GM12878 (cell line): ENCODE measurements at regions of chr1 and their contacts with region 1.

Region 1: DNA sequence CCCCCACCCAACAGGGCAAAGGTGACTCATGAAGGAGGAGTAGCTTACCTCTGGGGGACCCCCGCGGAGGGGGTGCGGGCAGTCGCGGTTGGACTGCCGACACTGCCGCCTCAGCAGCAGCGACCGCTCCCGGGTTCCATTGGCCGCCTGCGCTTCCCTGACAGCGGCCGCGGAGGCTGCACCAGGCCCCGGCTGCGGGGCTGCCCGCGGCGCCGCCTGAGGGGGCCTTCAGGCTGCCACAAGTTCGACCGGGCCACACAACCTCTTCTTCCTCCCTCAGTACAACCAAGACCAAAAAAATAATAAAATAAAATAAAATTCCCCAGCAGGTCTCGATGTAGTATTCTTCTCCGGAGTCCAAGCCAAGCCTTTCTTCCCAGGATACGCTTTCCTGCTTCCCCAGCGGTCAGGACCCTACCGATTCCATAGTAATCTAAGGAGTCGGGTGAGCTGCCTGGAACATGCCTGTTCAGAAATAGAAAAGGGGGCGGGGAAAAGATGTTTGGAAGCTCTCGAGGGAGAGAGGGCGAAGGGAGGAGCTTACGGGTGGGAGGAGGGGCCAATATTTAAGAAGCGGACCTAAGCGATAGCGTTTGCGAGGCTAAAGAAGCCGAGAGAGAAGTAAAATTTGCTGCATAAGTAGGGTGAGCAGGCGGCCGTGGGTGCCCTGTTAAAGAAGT is at the start of gene PI4KB:
- DNase-seq: peak; percentile 83
- ATAC-seq: peak; percentile 93
- H3K4me3 ChIP-seq: peak within 1 kb of the TSS; percentile 74
- H3K27ac ChIP-seq: peak within 1 kb of the TSS; percentile 95
- H3K4me1 ChIP-seq: peaks cover 9% of the 10 kb centered on the region; the same call in 1 of the 2 replicates
- H3K27me3 ChIP-seq: no peaks in the 10 kb centered on the region
- CTCF ChIP-seq: no peak
- EP300 ChIP-seq: no peak
- POLR2A ChIP-seq: peak; percentile 83
- RAD21 ChIP-seq: no peak
- polyA plus RNA-seq, gene PI4KB: 3.3 to 7.2 TPM

Region 2: GRCh38 chr1:151198255-151199127 is 128.9 kb before region 1 on chr1 and contains the start of gene PIP5K1A:
- CTCF ChIA-PET with region 1: interaction called, 3 read pairs
- POLR2A ChIA-PET with region 1: no interaction called
- RAD21 ChIA-PET with region 1: no interaction called
- SMC1A ChIA-PET with region 1: no interaction called
- in situ Hi-C with region 1: no loop called
- intact Hi-C with region 1: loop called (anchors 5 kb)
- DNase-seq: peak; percentile 93
- ATAC-seq: peak; percentile 92
- H3K4me3 ChIP-seq: peak within 1 kb of the TSS; percentile 98
- H3K27ac ChIP-seq: peak within 1 kb of the TSS; percentile 82
- H3K4me1 ChIP-seq: peaks cover 4% of the 10 kb centered on the region; the same call in 1 of the 2 replicates
- H3K27me3 ChIP-seq: no peaks in the 10 kb centered on the region
- CTCF ChIP-seq: no peak
- EP300 ChIP-seq: peak in 1 of 2 experiments; percentile 36; a peak in 1 of 4 replicates
- POLR2A ChIP-seq: peak; percentile 86
- RAD21 ChIP-seq: no peak
- polyA plus RNA-seq, gene PIP5K1A: 4.5 to 5.8 TPM

Region 3: DNA sequence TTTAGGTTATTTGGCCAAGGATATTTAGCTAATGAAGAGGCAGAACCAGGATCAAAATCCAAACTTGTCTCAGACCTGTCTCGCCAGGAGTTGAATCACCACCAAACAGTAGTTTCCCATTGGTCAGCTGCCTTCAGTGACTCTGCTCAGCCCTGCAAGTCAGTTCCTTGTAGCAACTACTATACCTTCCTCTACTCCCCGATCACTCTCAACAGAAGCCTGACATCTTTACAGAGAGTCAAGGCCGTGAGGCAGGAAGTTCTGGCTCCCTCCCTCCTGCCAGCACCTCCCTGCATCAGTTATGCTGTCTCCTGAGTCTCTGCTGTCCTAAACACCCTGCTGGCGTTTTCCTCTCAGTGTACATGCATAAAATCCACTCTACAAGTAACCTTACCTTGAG is 59.6 kb before region 1 on chr1:
- CTCF ChIA-PET with region 1: no interaction called
- POLR2A ChIA-PET with region 1: no interaction called
- RAD21 ChIA-PET with region 1: no interaction called
- SMC1A ChIA-PET with region 1: no interaction called
- in situ Hi-C with region 1: no loop called
- intact Hi-C with region 1: no loop called
- DNase-seq: no peak
- ATAC-seq: no peak
- H3K4me3 ChIP-seq: no peak overlapping the region
- H3K27ac ChIP-seq: no peak overlapping the region
- H3K4me1 ChIP-seq: no peaks in the 10 kb centered on the region
- H3K27me3 ChIP-seq: no peaks in the 10 kb centered on the region
- CTCF ChIP-seq: no peak
- EP300 ChIP-seq: no peak
- POLR2A ChIP-seq: no peak
- RAD21 ChIP-seq: no peak

Region 4: DNA sequence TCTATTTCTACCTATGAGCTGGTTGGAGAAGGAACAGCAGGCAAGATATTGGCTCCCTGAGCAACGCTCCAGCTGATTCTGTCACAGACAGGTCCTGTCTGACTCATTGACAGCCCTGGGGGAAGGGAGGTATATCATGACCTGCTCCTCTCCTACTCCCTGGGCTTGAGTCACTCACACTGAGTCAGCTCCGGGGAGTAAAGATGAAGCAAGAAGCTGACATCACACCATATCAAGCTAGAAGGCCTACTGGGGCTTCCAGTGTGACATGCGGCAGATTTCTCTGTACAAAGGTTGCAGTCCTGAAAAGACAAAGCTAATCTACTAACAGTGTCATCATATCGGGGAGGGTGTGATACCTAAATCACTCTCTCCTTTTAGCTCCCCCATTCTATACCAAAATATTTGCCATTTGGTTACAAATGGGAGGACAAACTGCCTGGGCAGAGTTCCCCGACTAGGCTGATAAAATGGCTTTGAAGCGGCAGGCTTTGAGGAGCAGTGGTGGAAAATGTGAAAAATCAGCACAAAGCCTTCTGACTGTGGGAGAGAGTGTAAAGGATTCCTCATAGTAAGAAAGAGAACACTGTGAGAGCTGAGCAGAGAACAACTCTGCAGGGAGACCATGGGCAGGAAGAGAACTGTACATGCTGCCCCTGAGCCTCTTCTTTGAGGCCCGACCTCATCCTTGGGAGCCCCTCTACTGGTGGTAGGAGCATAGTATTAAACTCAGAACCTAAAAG is 15.6 kb before region 1 on chr1:
- CTCF ChIA-PET with region 1: interaction called, 5 read pairs
- POLR2A ChIA-PET with region 1: interaction called, 19 read pairs
- RAD21 ChIA-PET with region 1: interaction called, 3 read pairs
- SMC1A ChIA-PET with region 1: interaction called, 12 read pairs
- in situ Hi-C with region 1: no loop called
- intact Hi-C with region 1: no loop called
- DNase-seq: no peak
- ATAC-seq: 0 out of 3 replicates have a peak, but pooled peaks have one; percentile 21
- H3K4me3 ChIP-seq: no peak overlapping the region
- H3K27ac ChIP-seq: no peak overlapping the region
- H3K4me1 ChIP-seq: no peaks in the 10 kb centered on the region
- H3K27me3 ChIP-seq: no peaks in the 10 kb centered on the region
- CTCF ChIP-seq: no peak
- EP300 ChIP-seq: no peak
- POLR2A ChIP-seq: no peak; the same call in 1 of the 2 replicates
- RAD21 ChIP-seq: no peak

Region 5: DNA sequence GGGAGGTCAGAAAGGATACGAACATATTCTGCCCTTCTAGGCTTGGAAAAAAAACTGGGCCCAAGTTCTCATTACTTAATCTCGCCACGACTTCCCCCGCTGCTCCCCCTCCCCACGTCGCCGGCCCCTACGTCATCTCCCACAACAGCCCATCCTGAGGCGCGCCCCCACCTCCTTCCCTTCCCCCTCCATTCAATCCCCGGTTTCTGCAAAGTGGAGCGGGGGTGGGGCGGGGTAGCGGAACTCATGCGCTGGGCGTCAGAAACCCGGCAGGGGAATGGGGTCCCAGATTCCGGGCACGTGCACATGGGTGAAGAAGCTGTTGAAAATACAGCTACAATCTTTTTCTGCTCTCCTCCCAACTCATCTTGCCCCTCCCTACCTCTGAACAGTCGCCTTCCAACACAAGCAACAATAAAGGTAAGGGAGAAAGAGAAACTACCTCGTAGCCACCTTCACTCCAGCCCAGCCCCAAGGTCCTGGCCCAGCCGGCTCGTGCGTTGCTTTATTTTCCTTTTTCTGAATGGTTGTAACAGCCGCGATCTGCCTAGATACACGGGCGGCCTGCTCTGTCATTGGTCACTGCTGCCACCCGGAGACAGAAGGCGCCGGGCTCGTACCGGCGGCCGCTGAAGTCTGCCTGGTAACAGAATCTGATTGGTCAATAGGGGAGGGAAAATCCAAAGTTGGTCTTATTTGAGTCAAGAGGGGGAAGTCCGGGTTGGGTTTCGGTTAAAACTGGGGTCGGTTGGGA is 19.6 kb after region 1 on chr1 and contains the start of gene RFX5:
- CTCF ChIA-PET with region 1: interaction called, 7 read pairs
- POLR2A ChIA-PET with region 1: interaction called, 110 read pairs
- RAD21 ChIA-PET with region 1: interaction called, 5 read pairs
- SMC1A ChIA-PET with region 1: interaction called, 75 read pairs
- in situ Hi-C with region 1: no loop called
- intact Hi-C with region 1: no loop called
- DNase-seq: peak; percentile 98
- ATAC-seq: peak; percentile 97
- H3K4me3 ChIP-seq: peak within 1 kb of the TSS; percentile 81
- H3K27ac ChIP-seq: peak within 1 kb of the TSS; percentile 99
- H3K4me1 ChIP-seq: peaks cover 7% of the 10 kb centered on the region
- H3K27me3 ChIP-seq: no peaks in the 10 kb centered on the region
- CTCF ChIP-seq: no peak
- EP300 ChIP-seq: peak; percentile 75 to 93
- POLR2A ChIP-seq: peak; percentile 67
- RAD21 ChIP-seq: no peak
- polyA plus RNA-seq, gene RFX5: 14.1 to 18.4 TPM

Region 6: GRCh38 chr1:151668090-151668489 is 340.7 kb after region 1 on chr1:
- CTCF ChIA-PET with region 1: no interaction called
- POLR2A ChIA-PET with region 1: no interaction called
- RAD21 ChIA-PET with region 1: no interaction called
- SMC1A ChIA-PET with region 1: no interaction called
- in situ Hi-C with region 1: no loop called
- intact Hi-C with region 1: no loop called
- DNase-seq: no peak
- ATAC-seq: no peak
- H3K4me3 ChIP-seq: no peak overlapping the region
- H3K27ac ChIP-seq: no peak overlapping the region
- H3K4me1 ChIP-seq: no peaks in the 10 kb centered on the region
- H3K27me3 ChIP-seq: no peaks in the 10 kb centered on the region
- CTCF ChIP-seq: no peak
- EP300 ChIP-seq: no peak
- POLR2A ChIP-seq: no peak
- RAD21 ChIP-seq: no peak

Region 7: GRCh38 chr1:151702936-151703335 is 375.6 kb after region 1 on chr1:
- CTCF ChIA-PET with region 1: no interaction called
- POLR2A ChIA-PET with region 1: no interaction called
- RAD21 ChIA-PET with region 1: no interaction called
- SMC1A ChIA-PET with region 1: no interaction called
- in situ Hi-C with region 1: no loop called
- intact Hi-C with region 1: no loop called
- DNase-seq: no peak
- ATAC-seq: no peak
- H3K4me3 ChIP-seq: no peak overlapping the region
- H3K27ac ChIP-seq: no peak overlapping the region
- H3K4me1 ChIP-seq: no peaks in the 10 kb centered on the region
- H3K27me3 ChIP-seq: no peaks in the 10 kb centered on the region
- CTCF ChIP-seq: no peak
- EP300 ChIP-seq: no peak
- POLR2A ChIP-seq: no peak
- RAD21 ChIP-seq: no peak